Activated CD8-positive, alpha-beta T cell treated with anti-CD3 and anti-CD28 coated beads for 36 hours (primary cell): ENCODE measurements at regions of chr9 and their contacts with region 1.

Region 1: DNA sequence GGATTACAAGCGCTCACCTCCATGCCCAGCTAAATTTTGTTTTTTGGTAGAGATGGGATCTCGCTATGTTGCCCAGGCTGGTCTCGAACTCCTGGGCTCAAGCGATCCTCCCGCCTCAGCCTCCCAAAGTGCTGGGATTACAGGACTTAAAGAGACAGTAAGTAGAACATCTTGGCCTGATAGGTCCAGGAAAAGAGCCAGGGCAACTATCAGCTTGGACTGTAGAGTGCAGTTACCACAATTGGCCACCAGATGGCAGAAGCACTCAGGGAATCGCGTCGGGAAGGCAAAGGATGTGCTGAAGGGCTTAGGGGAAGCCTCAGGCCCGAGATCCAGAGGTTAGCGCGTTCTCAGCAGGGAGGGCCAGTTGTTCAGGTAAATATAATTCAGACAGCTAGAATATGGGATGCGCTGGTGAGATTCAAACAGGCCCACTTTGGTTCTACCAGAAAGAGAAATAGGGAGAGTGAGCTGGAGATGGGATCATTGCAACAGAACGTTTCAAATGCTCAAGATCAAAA is 21.5 kb downstream of the C9orf57 start:
- DNase-seq: peak; percentile 75
- ATAC-seq: peak; percentile 92
- H3K4me3 Mint-ChIP-seq: no peak overlapping the region
- H3K27ac Mint-ChIP-seq: no peak overlapping the region
- H3K4me1 Mint-ChIP-seq: no peaks in the 10 kb centered on the region
- H3K27me3 Mint-ChIP-seq: peaks cover 5% of the 10 kb centered on the region
- CTCF ChIP-seq: peak; percentile 91

Region 2: GRCh38 chr9:71895117-71895516 is 143.8 kb before region 1 on chr9:
- CTCF ChIA-PET with region 1: no interaction called
- POLR2A ChIA-PET with region 1: no interaction called
- intact Hi-C with region 1: no loop called
- DNase-seq: no peak
- ATAC-seq: no peak
- H3K4me3 Mint-ChIP-seq: no peak overlapping the region
- H3K27ac Mint-ChIP-seq: peak overlapping the region; percentile 73
- H3K4me1 Mint-ChIP-seq: peaks cover 55% of the 10 kb centered on the region
- H3K27me3 Mint-ChIP-seq: no peaks in the 10 kb centered on the region
- CTCF ChIP-seq: no peak

Region 3: DNA sequence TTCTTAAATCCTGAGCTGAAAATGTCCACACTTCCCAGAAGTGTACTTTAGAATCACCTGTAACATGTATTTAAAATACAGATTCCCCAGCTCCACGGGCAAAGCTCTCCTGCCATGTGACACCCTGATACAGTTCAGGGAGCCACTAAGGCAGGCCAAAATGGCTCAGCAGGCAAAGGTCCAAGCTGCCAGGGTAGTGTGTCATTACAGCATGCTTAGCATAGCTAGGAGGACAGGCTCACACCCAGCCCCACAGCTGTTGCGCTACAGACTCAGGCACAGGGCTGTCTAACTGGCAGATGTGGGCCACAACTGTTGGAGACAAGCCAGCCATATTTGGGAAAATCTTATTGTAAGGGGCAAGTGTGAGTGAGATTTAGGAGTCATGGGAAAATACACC is 54.5 kb before region 1 on chr9:
- CTCF ChIA-PET with region 1: no interaction called
- POLR2A ChIA-PET with region 1: no interaction called
- intact Hi-C with region 1: no loop called
- DNase-seq: no peak
- ATAC-seq: no peak
- H3K4me3 Mint-ChIP-seq: no peak overlapping the region
- H3K27ac Mint-ChIP-seq: no peak overlapping the region
- H3K4me1 Mint-ChIP-seq: no peaks in the 10 kb centered on the region
- H3K27me3 Mint-ChIP-seq: no peaks in the 10 kb centered on the region
- CTCF ChIP-seq: no peak

Region 4: GRCh38 chr9:72013292-72013760 is 25.6 kb before region 1 on chr9:
- CTCF ChIA-PET with region 1: interaction called, 10 read pairs
- POLR2A ChIA-PET with region 1: no interaction called
- intact Hi-C with region 1: no loop called
- DNase-seq: no peak
- ATAC-seq: no peak
- H3K4me3 Mint-ChIP-seq: no peak overlapping the region
- H3K27ac Mint-ChIP-seq: no peak overlapping the region
- H3K4me1 Mint-ChIP-seq: peaks cover 13% of the 10 kb centered on the region
- H3K27me3 Mint-ChIP-seq: no peaks in the 10 kb centered on the region
- CTCF ChIP-seq: no peak

Region 5: DNA sequence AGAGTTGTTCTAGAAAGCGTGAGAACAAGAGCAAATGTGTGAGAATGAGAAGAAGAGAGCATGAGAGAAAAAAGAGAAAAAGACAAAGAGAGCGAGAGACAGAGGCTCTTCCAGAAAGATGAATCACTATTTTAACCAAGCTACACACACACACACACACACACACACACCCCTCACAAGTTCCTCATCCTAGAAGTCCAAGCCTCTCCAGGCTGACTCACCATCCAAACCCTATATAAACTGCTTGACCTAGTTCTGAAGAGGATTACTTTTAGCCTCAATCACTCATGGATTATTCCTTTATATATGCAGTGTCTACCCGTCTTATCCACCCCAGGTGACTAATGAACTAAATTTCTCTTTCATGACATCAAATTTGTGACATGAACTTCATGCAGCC is 16.1 kb before region 1 on chr9:
- CTCF ChIA-PET with region 1: interaction called, 57 read pairs
- POLR2A ChIA-PET with region 1: no interaction called
- intact Hi-C with region 1: no loop called
- DNase-seq: no peak
- ATAC-seq: no peak
- H3K4me3 Mint-ChIP-seq: no peak overlapping the region
- H3K27ac Mint-ChIP-seq: no peak overlapping the region
- H3K4me1 Mint-ChIP-seq: no peaks in the 10 kb centered on the region
- H3K27me3 Mint-ChIP-seq: no peaks in the 10 kb centered on the region
- CTCF ChIP-seq: no peak

Region 6: DNA sequence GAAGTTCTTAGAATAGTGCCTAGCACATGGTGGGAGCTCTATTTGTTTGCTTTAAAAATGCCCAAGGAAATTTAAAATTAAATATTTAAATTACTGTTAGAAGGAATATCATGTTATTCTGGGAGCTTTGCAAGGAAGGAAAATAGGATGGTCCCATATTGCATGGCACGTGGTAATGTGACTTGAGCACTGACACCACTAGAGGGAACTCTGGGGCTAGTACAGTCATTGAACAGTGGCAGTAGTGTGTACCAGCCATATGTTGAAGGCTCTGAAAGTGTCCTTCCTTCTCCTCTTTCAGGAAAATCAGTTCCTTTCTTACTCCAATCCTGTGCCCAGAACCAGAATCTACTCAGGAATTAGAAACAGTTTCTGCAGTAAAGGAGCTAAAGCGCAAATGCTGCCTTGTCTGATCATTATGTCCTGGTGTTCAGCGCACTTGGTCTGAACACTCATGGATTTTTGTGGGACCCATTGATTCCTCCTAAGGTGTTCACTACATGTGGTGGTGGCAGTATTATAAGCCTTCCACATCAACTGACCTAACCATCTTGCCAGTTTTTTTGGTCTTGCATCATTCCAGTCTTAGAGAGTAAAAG is 164.4 kb after region 1 on chr9:
- CTCF ChIA-PET with region 1: interaction called, 16 read pairs
- POLR2A ChIA-PET with region 1: no interaction called
- intact Hi-C with region 1: no loop called
- DNase-seq: peak; percentile 10
- ATAC-seq: no peak
- H3K4me3 Mint-ChIP-seq: no peak overlapping the region
- H3K27ac Mint-ChIP-seq: no peak overlapping the region
- H3K4me1 Mint-ChIP-seq: no peaks in the 10 kb centered on the region
- H3K27me3 Mint-ChIP-seq: peaks cover 10% of the 10 kb centered on the region
- CTCF ChIP-seq: peak; percentile 32

Region 7: DNA sequence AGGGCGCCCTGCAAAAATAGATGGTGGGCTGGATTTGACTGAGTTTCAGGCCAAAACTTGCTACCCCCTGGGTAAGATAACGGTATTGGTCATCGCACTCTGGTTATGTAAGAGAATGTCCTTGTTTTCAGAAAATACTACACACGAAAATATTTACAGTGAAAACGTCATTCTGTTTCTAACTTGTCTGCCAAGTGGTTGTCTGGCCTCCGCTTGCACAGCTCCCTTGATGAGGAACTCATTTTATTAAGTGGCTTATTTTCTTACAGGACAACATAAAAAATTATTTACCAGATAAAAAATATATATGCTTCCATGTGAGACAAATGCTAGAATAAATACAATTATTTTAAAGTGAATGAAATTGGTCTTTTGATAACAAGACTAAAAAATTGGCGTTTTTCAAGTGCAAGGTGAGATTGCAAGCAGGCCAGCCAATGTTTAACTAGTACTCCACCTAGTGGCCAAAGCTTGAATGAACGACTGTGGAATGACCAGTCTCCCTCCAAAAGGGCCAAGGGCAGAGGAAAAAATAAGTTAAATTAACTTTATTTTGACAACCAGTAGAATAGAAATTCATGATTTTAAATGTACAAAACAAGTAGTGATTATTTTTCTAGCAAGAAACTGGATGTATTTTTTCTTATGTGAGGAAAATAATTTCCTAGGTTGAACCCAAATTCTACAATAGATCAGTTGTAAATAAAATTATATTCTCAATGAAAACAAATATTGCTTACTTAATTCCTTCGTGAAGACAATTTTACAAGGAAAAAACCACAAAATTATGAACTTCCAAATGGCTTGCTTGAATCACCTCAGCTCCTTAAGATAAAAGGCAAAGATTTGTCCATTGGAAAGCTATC is 232.9 kb after region 1 on chr9:
- CTCF ChIA-PET with region 1: interaction called, 90 read pairs
- POLR2A ChIA-PET with region 1: no interaction called
- intact Hi-C with region 1: loop called (anchors 1 kb)
- DNase-seq: peak; percentile 67
- ATAC-seq: peak; percentile 65
- H3K4me3 Mint-ChIP-seq: no peak overlapping the region
- H3K27ac Mint-ChIP-seq: no peak overlapping the region
- H3K4me1 Mint-ChIP-seq: no peaks in the 10 kb centered on the region
- H3K27me3 Mint-ChIP-seq: no peaks in the 10 kb centered on the region
- CTCF ChIP-seq: peak; percentile 85